Left cardiac atrium (tissue), 4 donors: ENCODE measurements at regions of chr20 and their contacts with region 1.

Region 1: DNA sequence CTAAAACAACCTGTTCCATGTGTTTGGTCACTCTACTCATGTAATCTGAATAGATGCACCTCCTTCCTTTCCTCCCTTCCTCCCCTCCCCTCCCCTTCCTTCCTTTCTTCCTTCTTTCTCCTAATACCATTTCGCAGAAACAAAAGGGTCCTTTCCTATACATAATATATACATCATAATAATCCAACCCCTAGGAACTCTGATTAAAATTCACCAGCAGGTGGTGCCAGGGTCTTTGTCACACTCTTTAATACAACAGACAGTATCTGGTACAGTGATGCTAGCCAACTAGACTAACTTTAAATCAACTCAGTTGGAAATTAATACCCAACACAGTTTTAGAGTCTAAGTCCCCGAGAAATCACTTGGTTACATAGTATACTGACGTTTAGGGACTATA is 181.2 kb upstream of the SHLD1 start:
- DNase-seq: no peak
- ATAC-seq: peak; percentile 56 to 67

Region 2: DNA sequence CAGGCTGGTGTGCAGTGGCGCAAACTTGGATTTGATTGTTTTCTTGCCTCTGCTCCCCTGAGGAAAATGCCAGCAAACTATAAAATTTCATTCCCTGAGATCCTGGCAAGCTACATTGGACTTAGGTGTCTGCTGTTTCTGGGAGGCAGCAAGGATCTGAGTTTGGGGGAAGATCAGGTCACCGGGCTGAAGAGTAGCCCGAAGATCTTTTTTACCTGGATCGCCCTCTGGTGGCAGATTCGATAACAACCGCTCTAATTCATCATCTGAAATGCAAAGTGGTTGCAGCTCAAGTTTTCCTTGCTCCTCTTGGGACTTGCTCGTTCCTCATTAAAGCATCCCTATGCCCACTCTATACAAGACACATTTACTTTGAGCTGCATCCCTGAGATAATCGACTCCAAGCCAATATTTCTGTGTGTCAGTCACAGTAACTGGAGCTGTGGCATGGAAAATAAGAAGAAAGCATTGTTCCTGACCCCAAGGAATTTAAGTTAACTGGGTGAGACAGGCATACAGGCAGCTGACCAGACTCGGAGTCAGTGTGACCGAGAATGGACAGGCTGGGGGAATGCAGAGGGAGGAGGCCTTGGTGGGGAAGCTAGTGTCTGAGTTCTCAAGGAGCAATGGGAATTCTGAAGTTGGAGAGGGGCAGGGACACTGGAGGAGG is 120.4 kb before region 1 on chr20:
- intact Hi-C with region 1: no loop called
- DNase-seq: no peak
- ATAC-seq: no peak

Region 3: GRCh38 chr20:5945963-5946362 is 376.9 kb after region 1 on chr20:
- intact Hi-C with region 1: loop called in 1 of 2 experiments (anchors 10 kb)
- DNase-seq: no peak
- ATAC-seq: no peak